ENCODE measurements at regions of chr18 and their contacts with region 1.

Region 1: GRCh38 chr18:47968006-47968676 is 37.7 kb upstream of the SMAD2 start:
- DNase-seq: no peak
- ATAC-seq: no peak
- H3K4me3 ChIP-seq: no peak overlapping the region
- H3K27ac ChIP-seq: peak overlapping the region; percentile 42 to 88
- H3K4me1 ChIP-seq: no peaks in the 10 kb centered on the region
- H3K27me3 ChIP-seq: no peaks in the 10 kb centered on the region

Region 2: GRCh38 chr18:48002933-48003365 is 34.8 kb after region 1 on chr18:
- intact Hi-C with region 1: loop called in 1 of 2 experiments (anchors 5 kb)
- DNase-seq: peak; percentile 85 to 90
- ATAC-seq: peak; percentile 80
- H3K4me3 ChIP-seq: no peak overlapping the region
- H3K27ac ChIP-seq: peak overlapping the region in 1 of 2 donors; percentile 53
- H3K4me1 ChIP-seq: no peaks in the 10 kb centered on the region
- H3K27me3 ChIP-seq: no peaks in the 10 kb centered on the region

Region 3: DNA sequence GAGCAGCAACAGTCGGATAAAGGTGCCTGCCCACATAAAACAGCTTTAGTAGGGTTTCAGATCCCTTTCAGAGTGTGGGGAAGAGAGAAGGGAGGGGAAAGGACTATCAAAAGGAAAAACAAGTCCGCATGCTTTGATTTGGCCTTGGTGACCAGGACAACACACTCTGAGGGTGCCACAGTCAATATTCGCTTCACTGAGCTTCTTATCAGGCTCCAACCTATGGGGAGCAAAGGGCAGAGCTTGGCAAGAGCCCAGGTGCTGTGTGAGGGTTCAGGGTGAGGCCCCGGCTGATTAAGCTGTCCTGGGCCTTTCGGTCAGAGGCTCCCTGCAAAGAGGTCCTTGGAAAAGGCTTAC is 199.7 kb after region 1 on chr18:
- intact Hi-C with region 1: no loop called
- DNase-seq: peak in 1 of 2 donors; percentile 13
- ATAC-seq: no peak
- H3K4me3 ChIP-seq: no peak overlapping the region
- H3K27ac ChIP-seq: no peak overlapping the region
- H3K4me1 ChIP-seq: no peaks in the 10 kb centered on the region
- H3K27me3 ChIP-seq: no peaks in the 10 kb centered on the region

Measured in aorta (tissue), 5 donors.